Activated T-helper 1 cell treated with anti-CD3 and anti-CD28 coated beads, Interleukin-12 subunit alpha, Interleukin-12 subunit beta, Interleukin-2, Interleukin-4 antibody, amounts not matched to agents 30 ng/mL and 10 ng/mL and 1 ng/mL, durations not matched to agents 14 hours and 24 hours and 36 hours (primary cell): ENCODE measurements at regions of chr3 and their contacts with region 1.

Region 1: GRCh38 chr3:188154014-188154808 is at the start of gene LPP:
- DNase-seq: peak; percentile 90
- H3K4me3 Mint-ChIP-seq: peak within 1 kb of the TSS; percentile 89
- H3K27ac Mint-ChIP-seq: peak within 1 kb of the TSS; percentile 87
- H3K4me1 Mint-ChIP-seq: peaks cover 71% of the 10 kb centered on the region
- H3K27me3 Mint-ChIP-seq: no peaks in the 10 kb centered on the region
- total RNA-seq, gene LPP: 38.2 and 46.4 TPM in 2 replicates

Region 2: DNA sequence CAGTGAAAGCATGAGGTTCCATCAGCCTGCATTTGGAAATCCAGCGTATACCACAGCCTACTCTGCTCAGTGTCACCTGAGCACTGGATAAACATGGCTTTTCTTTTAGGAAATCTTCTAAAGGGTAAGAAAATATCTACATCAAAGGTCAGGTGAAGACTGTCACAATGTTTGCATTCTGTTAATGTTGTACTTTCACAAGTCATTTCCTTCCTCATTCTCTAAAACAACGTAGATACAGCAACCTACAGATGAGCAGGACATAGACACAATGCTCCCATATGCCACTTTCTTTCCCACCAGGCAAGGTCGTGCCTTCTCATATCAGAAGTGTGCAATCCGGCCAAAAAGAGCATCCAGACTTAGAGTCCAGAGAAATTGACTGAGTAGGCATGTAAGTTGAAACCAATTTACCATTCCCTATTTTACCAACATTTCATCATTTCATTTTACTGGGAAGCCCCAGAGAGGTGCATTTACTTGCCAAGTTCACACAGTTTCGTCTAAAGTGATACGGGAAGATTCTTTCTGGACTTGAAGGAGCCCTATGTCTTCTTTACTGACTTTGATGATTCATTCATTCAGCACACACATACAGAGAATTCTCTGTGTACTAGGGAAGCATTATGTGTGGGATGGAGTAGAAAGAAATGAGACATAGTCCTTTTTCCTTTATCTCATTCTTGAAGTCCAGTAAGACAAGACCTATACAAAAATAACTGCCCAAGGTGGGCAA is 30.9 kb before region 1 on chr3:
- intact Hi-C with region 1: loop called (anchors 1 kb)
- DNase-seq: no peak
- H3K4me3 Mint-ChIP-seq: no peak overlapping the region
- H3K27ac Mint-ChIP-seq: peak overlapping the region; percentile 7
- H3K4me1 Mint-ChIP-seq: peaks cover 17% of the 10 kb centered on the region
- H3K27me3 Mint-ChIP-seq: peaks cover 1% of the 10 kb centered on the region

Region 3: DNA sequence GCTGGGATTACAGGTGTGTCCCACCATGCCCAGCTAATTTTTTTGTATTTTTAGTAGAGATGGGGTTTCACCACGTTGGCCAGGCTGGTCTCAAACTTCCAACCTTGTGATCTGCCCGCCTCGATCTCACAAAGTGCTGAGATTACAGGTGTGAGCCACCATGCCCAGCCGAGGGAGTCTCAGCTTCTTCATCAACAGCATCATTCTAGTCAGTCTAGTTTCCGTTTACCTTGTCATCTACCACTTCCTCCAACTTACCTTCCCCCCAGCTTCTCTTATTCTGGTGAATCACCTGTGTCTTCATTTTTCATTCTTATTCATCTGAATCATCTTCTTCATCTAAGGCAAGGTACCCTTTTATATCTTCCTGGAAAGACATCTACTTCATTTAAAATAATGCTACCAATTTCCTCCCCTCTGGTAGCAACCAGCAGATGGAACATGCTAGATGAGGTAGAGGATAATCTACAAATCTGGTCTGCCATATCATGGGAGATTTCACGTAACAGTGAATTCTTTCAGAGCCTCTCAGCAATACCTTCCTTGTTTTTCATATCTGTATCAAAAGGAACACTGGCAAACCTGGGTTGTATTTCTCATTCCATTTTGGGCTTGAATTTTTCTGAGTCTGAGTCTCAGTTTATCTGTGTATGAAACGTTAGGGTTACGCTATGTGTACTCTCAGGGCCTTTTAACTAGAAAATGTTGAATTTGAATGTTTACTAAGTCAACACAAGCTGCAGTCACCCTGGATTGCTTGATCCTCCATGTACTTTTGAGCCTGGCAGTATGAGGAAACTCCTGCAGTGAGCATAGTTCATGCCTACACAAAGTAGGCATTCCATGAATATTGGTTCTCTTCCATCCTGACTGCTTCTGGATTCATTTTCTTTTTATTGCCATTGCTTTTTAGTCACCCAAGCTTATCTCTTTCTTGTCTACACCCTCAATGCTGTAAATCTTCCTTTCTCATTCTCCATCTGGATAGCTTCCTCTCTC is 16.5 kb after region 1 on chr3:
- intact Hi-C with region 1: loop called (anchors 1 kb)
- DNase-seq: no peak
- H3K4me3 Mint-ChIP-seq: peak overlapping the region; percentile 9
- H3K27ac Mint-ChIP-seq: peak overlapping the region; percentile 49
- H3K4me1 Mint-ChIP-seq: peaks cover 52% of the 10 kb centered on the region
- H3K27me3 Mint-ChIP-seq: no peaks in the 10 kb centered on the region

Region 4: GRCh38 chr3:188257384-188258026 is 103.3 kb after region 1 on chr3:
- intact Hi-C with region 1: loop called (anchors 5 kb)
- DNase-seq: no peak
- H3K4me3 Mint-ChIP-seq: no peak overlapping the region
- H3K27ac Mint-ChIP-seq: peak overlapping the region; percentile 63
- H3K4me1 Mint-ChIP-seq: peaks cover 62% of the 10 kb centered on the region
- H3K27me3 Mint-ChIP-seq: peaks cover 2% of the 10 kb centered on the region

Region 5: DNA sequence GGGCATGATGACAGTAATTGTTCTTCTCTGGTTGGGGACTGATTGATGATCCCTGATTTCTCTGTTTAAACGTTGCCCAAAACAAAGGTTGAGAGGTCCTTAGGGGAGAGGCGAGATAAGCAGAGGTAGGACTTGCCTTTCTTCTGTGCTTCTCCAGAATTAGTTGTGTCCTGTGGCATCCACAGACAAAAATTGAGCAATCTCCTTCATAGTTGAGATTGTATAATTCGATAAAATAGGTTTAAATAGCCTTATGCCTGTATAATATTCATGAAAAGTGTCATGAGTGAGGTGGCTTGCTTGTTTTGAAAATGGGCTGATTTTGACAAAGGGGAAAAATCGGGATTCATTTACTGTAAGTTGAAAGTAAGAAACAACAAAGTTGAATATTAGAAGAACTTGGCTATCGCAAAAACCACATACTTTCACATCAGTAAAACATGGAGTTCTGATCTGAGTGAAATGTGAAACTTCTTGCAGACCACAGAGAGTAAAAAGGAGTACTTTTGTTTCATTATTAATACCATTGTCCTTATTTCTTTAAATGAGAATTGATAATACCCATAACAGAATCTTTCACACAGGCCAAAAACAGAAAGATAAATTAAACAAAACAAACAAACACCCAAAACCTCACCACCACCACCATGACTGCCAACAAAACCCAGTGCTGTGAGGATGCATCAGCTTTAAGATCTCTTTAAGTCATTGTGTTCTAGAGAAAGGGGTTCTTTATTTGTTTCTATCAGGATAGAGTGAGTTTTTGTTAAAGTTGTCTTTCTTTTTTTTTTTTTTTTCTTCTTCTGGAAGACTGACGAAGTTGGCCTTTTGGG is 155.4 kb after region 1 on chr3:
- intact Hi-C with region 1: loop called (anchors 1 kb)
- DNase-seq: no peak
- H3K4me3 Mint-ChIP-seq: peak overlapping the region; percentile 40
- H3K27ac Mint-ChIP-seq: peak overlapping the region; percentile 64
- H3K4me1 Mint-ChIP-seq: peaks cover 35% of the 10 kb centered on the region
- H3K27me3 Mint-ChIP-seq: peaks cover 9% of the 10 kb centered on the region

Region 6: GRCh38 chr3:188584162-188584529 is 429.9 kb after region 1 on chr3:
- intact Hi-C with region 1: loop called (anchors 10 kb)
- DNase-seq: no peak
- H3K4me3 Mint-ChIP-seq: no peak overlapping the region
- H3K27ac Mint-ChIP-seq: no peak overlapping the region
- H3K4me1 Mint-ChIP-seq: no peaks in the 10 kb centered on the region
- H3K27me3 Mint-ChIP-seq: no peaks in the 10 kb centered on the region